ENCODE measurements at regions of chr1 and their contacts with region 1.

Region 1: DNA sequence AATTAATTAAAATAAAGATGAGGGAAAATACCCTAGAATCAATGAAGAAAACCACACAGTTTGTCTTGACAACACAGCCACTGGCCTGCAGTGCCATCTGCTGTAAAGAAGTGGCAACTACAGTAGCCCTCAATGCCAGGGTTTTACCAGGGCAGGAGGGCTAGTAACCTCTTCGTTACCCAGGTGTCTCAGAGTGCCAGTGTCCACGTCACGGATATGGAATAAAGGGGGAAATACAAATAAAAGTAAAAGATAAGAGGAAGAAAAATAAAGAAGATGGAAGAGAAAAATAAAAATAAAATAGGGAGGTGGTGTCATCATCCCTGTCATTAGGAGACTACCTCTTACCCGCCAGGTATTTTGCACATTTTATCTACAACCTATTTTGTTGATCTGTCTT is 14.2 kb upstream of the SLC44A3 start:
- DNase-seq: no peak
- ATAC-seq: peak; percentile 64 to 78 (median 73)
- H3K4me3 ChIP-seq: no peak overlapping the region
- H3K27ac ChIP-seq: no peak overlapping the region
- H3K4me1 ChIP-seq: peaks cover 10% of the 10 kb centered on the region
- H3K27me3 ChIP-seq: no peaks in the 10 kb centered on the region
- CTCF ChIP-seq: peak; percentile 98

Region 2: DNA sequence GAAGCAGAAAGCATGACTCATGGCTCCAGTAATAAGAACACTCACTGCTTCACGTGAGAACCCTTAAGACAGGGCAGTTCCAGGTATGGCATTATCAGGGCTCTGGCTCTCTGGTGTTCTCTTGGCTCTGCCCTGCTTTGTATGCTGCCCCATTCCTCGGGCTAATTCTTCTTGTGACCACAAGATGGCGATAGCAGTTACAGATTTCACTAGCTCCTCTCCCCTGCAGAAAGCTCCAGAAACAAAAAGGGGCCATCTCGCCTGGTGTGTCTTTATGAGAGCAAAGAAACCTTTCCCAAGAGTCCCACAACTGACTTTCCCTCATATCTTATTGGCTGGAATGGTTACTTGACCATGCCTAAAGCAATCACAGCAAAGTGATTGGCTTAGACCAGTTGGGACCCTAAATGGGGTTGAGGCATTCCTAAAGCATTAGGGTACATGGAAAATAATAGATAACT is 324.4 kb before region 1 on chr1:
- intact Hi-C with region 1: loop called (anchors 1 to 5 kb)
- DNase-seq: peak in 1 of 2 donors; percentile 36
- ATAC-seq: peak; percentile 58 to 90 (median 84)
- H3K4me3 ChIP-seq: no peak overlapping the region
- H3K27ac ChIP-seq: no peak overlapping the region
- H3K4me1 ChIP-seq: no peaks in the 10 kb centered on the region
- H3K27me3 ChIP-seq: no peaks in the 10 kb centered on the region
- CTCF ChIP-seq: peak; percentile 77

Region 3: GRCh38 chr1:94522304-94522703 is 283.6 kb before region 1 on chr1:
- intact Hi-C with region 1: loop called in 1 of 2 experiments (anchors 5 kb)
- DNase-seq: no peak
- ATAC-seq: peak in 1 of 4 donors; percentile 45
- H3K4me3 ChIP-seq: no peak overlapping the region
- H3K27ac ChIP-seq: no peak overlapping the region
- H3K4me1 ChIP-seq: no peaks in the 10 kb centered on the region
- H3K27me3 ChIP-seq: no peaks in the 10 kb centered on the region
- CTCF ChIP-seq: peak; percentile 29

Region 4: DNA sequence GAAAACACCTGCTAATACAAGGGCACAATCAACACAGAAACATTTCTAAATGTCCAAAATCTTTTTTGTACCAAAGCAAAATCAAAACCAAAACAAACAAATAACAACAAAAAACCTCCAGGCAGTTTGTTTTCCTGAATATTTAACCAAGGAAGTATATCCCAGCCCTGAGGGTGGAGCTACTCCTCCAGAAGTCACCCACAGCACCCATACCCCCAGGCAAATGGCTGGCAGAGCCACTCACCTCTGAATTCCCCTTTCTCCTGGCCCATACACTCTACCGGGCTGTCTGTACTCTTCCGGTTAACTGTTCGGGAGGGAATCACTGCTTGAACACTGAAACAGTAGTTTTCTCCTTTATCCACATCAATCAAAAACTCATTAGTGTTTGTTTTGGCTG is 273.8 kb before region 1 on chr1:
- intact Hi-C with region 1: loop called in 1 of 2 experiments (anchors 5 kb)
- DNase-seq: no peak
- ATAC-seq: no peak
- H3K4me3 ChIP-seq: no peak overlapping the region
- H3K27ac ChIP-seq: no peak overlapping the region
- H3K4me1 ChIP-seq: no peaks in the 10 kb centered on the region
- H3K27me3 ChIP-seq: peaks cover 0 to 2% (median under 1%) of the 10 kb centered on the region in 3 donors
- CTCF ChIP-seq: no peak